CD4-positive, alpha-beta T cell (primary cell): ENCODE measurements at regions of chr6 and their contacts with region 1.

Region 1: DNA sequence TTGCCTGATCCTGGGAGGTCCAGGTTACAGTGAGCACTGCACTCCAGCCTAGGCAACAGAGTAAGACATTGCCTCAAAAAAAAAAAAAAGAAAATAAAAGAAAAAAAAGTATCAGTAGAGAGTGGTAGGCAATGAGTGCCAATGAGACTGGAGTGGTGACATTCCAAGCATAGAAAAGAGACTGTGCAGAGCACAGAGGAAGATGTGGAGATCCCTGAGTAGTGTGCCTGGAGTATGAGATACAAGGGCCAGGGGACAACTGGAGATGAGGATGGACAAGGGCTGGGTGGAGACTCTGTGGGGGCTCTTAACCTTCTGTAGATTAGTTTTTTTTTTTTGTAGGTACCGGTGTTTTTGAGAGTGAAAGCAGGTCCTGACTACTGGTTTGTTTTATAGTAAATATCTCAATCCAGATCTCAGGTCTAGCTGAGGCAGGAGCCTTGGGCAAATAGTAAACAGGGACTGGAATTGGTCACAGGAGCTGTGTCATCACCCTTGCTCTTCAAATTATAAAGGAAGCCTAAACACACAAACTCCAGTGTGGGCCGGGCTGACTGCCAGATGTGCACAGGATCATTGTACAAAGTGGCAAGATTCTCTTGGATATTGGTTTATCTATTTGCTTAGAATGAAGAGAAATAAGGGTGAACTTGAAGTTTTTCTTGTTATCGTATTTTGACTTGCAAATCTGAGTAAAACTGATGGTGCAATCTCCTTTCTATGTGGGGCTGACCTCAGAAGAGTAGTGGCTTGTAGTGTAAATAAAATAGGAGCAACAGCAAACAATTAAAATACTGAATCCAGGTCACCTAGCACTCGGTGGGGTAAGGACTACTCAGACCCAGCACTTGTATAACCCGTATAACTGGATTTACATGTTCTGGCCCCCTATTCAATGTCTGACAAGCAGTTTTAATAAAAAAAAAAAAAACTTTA is 144.9 kb downstream of the SOX4 start:
- DNase-seq: no peak
- ATAC-seq: no peak
- H3K4me3 ChIP-seq: no peak overlapping the region
- H3K4me3 Mint-ChIP-seq: no peak overlapping the region
- H3K27ac ChIP-seq: no peak overlapping the region
- H3K27ac Mint-ChIP-seq: no peak overlapping the region
- H3K4me1 ChIP-seq: no peaks in the 10 kb centered on the region
- H3K4me1 Mint-ChIP-seq: no peaks in the 10 kb centered on the region
- H3K27me3 ChIP-seq: peaks cover 0 to 5% of the 10 kb centered on the region in 2 experiments
- H3K27me3 Mint-ChIP-seq: no peaks in the 10 kb centered on the region
- CTCF ChIP-seq: no peak

Region 2: DNA sequence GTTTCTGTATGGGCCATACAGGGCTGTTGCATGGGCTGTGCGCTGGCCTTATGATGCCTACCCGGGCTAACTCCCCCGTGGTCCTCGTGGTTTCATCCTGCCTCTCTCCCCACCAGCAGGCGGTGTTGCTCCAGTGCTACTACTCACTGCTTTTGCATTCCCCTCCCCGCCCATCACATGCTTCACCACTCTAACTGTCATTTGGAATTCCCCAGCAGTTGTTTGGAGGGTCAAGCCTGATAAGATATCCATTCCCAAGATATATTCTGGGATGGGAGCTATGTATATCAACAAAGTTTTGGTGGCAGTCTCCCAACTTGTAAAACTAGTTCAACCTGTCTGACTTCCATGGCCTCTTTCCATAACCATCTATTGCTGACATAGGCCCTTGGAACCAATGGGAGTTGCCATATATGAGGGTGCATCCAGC is 378.1 kb before region 1 on chr6:
- CTCF ChIA-PET with region 1: no interaction called
- POLR2A ChIA-PET with region 1: no interaction called
- intact Hi-C with region 1: no loop called
- DNase-seq: no peak
- ATAC-seq: no peak
- H3K4me3 ChIP-seq: no peak overlapping the region
- H3K4me3 Mint-ChIP-seq: no peak overlapping the region
- H3K27ac ChIP-seq: no peak overlapping the region
- H3K27ac Mint-ChIP-seq: no peak overlapping the region
- H3K4me1 ChIP-seq: no peaks in the 10 kb centered on the region
- H3K4me1 Mint-ChIP-seq: no peaks in the 10 kb centered on the region
- H3K27me3 ChIP-seq: no peaks in the 10 kb centered on the region
- H3K27me3 Mint-ChIP-seq: no peaks in the 10 kb centered on the region
- CTCF ChIP-seq: no peak

Region 3: GRCh38 chr6:21780679-21781078 is 42.2 kb after region 1 on chr6:
- CTCF ChIA-PET with region 1: no interaction called
- POLR2A ChIA-PET with region 1: no interaction called
- intact Hi-C with region 1: loop called in 1 of 2 experiments (anchors 1 kb)
- DNase-seq: no peak
- ATAC-seq: no peak
- H3K4me3 ChIP-seq: no peak overlapping the region
- H3K4me3 Mint-ChIP-seq: no peak overlapping the region
- H3K27ac ChIP-seq: no peak overlapping the region
- H3K27ac Mint-ChIP-seq: no peak overlapping the region
- H3K4me1 ChIP-seq: no peaks in the 10 kb centered on the region
- H3K4me1 Mint-ChIP-seq: no peaks in the 10 kb centered on the region
- H3K27me3 ChIP-seq: no peaks in the 10 kb centered on the region
- H3K27me3 Mint-ChIP-seq: no peaks in the 10 kb centered on the region
- CTCF ChIP-seq: no peak